ENCODE measurements at regions of chr2 and their contacts with region 1.

Region 1: DNA sequence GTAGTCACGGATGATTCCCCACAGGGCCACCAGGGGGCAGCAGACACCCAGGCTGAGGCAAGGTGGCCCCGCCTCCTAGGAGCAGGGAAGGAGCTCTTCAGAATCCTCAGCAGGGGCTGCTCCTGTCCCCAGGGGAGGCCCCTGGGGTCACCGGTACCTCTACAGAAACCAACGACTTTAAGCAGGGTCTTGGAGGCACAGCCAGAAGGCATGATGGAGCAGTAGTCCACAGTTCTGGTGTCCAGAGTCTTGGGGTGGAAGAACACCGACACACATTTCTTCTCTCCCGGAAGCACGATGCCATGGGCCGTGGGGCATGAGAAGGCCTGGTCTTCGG is 11.5 kb downstream of the CFAP65 start:
- DNase-seq: peak; percentile 83
- H3K4me3 Mint-ChIP-seq: no peak overlapping the region
- H3K27ac Mint-ChIP-seq: no peak overlapping the region
- H3K4me1 Mint-ChIP-seq: no peaks in the 10 kb centered on the region
- H3K27me3 Mint-ChIP-seq: peaks cover 18% of the 10 kb centered on the region

Region 2: DNA sequence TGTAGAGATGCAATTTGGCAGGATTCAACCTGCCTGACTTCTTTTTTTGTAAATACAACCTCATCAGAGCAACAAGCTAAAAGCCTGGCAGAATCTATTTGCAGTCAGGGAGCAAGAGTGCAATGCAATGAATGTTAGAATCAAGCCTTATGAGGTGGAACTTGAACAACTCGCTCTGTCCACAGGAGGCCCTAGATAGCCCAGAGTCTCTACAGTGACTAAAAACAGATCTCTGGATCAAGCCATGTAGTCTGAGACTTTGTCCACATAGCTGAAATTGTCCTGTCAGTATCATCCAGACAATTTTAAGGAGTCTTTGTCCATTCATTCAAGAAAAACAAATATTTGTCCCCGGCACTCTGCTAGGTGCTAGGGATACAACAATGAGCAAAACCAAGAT is 102.4 kb before region 1 on chr2:
- CTCF ChIA-PET with region 1: no interaction called
- intact Hi-C with region 1: no loop called
- DNase-seq: no peak
- H3K4me3 Mint-ChIP-seq: no peak overlapping the region
- H3K27ac Mint-ChIP-seq: no peak overlapping the region
- H3K4me1 Mint-ChIP-seq: no peaks in the 10 kb centered on the region
- H3K27me3 Mint-ChIP-seq: peaks cover 28% of the 10 kb centered on the region

Region 3: DNA sequence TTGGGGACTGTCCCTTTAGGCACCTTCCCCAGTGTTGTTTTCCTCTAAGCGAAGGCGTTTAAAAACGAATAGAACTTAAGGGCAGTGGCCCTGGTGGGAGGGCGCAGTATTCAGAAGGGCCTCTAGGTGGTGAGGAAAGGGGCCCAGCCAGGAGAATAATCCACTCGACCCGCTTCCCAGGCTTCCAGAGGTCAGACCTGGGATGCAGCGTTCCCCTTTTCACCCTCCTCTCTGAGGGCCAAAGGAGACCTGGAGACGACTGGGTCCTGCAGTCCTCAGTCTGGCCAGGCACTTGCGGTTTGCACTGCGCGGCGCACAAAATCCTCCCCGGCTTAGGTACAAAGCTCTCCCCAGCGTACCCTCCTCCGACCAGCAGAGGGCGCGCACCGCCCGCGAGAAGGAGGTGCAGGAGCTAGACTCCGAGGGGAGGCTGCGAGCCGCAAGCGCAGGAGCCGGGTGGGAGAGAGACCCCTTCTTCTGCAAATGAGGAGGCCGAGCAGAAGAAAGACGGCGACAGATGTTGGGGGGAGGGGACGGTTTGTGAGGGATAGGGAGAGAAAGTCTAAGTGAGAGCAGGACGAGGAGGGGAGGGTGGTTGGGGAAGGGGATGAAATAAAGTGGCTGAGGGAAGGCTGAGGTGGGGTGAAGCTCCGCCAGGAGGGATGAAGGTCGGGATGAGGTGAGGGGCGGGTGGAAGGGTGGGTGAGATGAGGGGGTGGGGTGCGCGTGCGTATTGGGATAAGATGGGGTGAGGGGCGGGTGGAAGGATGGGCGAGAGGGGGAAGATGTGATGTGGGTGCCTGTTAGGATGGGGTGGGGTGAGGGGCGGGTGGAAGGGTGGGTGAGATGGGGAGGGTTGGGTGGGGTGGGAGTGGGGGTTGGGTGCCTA is 49.7 kb before region 1 on chr2:
- CTCF ChIA-PET with region 1: interaction called, 16 read pairs
- intact Hi-C with region 1: loop called (anchors 1 kb)
- DNase-seq: peak; percentile 90
- H3K4me3 Mint-ChIP-seq: peak overlapping the region; percentile 56
- H3K27ac Mint-ChIP-seq: no peak overlapping the region
- H3K4me1 Mint-ChIP-seq: peaks cover 27% of the 10 kb centered on the region
- H3K27me3 Mint-ChIP-seq: peaks cover 58% of the 10 kb centered on the region

Region 4: DNA sequence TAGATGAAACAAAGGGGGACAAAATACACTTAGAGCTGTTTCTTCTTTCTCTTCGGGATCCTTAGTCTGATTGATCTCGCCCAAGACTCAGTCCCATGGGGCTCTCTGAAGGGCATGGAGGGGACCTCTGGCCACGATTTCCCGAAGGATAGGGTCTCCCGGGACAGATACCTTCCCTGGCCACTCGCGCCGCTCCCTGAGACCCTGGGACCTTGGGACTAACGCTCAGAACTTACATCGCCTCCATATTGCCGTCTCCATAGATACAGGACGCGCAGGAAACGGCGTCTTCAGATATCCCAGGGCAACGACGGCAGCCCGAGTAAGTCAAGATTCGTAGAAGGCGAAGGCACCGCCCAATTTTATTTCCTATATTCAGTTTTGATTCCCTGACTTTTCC is 11.5 kb after region 1 on chr2 and contains the start of gene CFAP65:
- CTCF ChIA-PET with region 1: interaction called, 19 read pairs
- intact Hi-C with region 1: no loop called
- DNase-seq: peak; percentile 65
- H3K4me3 Mint-ChIP-seq: peak within 1 kb of the TSS; percentile 67
- H3K27ac Mint-ChIP-seq: peak within 1 kb of the TSS; percentile 19
- H3K4me1 Mint-ChIP-seq: peaks cover 8% of the 10 kb centered on the region
- H3K27me3 Mint-ChIP-seq: peaks cover 34% of the 10 kb centered on the region
- total RNA-seq, gene CFAP65: not detected

Region 5: DNA sequence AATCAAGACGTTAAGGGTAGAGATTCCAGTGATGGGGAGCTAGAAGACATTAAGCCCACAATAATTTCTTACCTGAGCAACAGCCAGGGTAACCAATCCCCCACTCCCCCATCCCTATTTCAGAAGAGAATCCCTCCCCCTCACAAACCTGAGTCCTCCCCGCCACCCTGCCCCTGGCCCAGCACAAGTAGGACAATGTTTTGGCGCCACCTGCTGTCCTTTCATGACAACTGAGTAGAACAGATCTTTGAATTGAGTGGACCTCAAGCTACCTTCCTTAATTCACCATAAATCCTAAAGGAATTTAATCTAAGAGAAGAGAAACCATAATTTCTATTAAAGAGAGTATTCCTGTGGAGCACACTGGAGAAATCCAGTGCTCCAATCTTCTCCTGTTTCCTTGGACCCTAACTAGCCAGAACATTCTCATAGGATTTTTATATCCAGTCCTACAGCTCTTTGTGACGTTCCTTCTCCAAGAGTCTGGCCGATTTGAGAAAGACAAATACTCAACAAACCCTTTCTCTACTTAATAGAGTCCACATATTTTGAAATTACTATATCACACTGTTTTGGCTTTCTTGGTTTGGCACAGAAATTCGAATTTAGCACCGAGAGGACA is 89.7 kb after region 1 on chr2:
- CTCF ChIA-PET with region 1: interaction called, 17 read pairs
- intact Hi-C with region 1: loop called (anchors 1 kb)
- DNase-seq: peak; percentile 78
- H3K4me3 Mint-ChIP-seq: no peak overlapping the region
- H3K27ac Mint-ChIP-seq: no peak overlapping the region
- H3K4me1 Mint-ChIP-seq: peaks cover 4% of the 10 kb centered on the region
- H3K27me3 Mint-ChIP-seq: no peaks in the 10 kb centered on the region

Region 6: DNA sequence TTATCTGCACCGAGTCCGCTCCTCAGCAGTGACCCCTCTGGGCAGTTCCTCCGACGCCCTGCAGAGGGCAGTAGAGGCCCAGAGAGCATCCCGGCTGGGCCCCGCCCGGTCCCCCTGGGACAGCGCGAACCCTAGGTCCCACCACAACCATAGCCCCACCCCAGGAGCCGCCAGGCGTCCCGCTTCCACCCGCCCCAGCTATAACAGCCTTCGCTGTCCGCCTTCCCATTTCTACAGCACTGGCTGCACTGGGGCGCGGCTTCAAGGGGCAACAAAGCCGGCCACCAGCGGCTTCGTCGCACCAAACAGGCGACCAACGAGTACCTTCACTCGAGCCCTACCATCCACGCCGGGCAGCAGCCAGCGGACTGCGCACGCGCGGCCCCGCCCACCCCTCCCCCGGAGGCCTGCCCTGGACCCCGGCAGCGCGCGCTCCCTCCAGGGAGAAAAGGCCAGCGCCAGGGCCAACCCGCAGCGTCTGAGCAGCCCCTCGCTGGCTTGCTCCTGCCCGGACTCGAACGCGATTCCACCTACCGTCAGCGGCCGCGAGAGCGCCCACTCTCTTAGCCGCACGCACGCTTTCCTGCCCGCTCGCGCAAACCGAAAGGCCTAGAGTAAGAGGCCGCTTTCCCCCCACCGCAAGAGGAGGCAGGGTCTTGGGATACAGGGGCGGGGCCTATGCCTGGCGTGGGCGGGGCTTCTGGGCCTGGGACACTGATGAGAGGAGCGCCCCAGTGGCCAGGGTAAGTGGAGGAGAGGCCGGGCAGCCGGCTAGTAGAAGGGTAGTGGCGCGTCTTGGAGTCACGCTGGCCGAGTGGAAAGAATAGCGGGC is 130.6 kb after region 1 on chr2 and contains the start of gene NHEJ1:
- CTCF ChIA-PET with region 1: interaction called, 72 read pairs
- intact Hi-C with region 1: loop called (anchors 1 kb)
- DNase-seq: peak; percentile 96
- H3K4me3 Mint-ChIP-seq: peak within 1 kb of the TSS; percentile 80
- H3K27ac Mint-ChIP-seq: peak within 1 kb of the TSS; percentile 88
- H3K4me1 Mint-ChIP-seq: peaks cover 13% of the 10 kb centered on the region
- H3K27me3 Mint-ChIP-seq: no peaks in the 10 kb centered on the region
- total RNA-seq, gene NHEJ1: 24.4 to 26.6 TPM